ENCODE measurements at regions of chr14 and their contacts with region 1.

Region 1: GRCh38 chr14:91286530-91286937 is 42.0 kb upstream of the GPR68 start:
- DNase-seq: peak; percentile 87

Region 2: DNA sequence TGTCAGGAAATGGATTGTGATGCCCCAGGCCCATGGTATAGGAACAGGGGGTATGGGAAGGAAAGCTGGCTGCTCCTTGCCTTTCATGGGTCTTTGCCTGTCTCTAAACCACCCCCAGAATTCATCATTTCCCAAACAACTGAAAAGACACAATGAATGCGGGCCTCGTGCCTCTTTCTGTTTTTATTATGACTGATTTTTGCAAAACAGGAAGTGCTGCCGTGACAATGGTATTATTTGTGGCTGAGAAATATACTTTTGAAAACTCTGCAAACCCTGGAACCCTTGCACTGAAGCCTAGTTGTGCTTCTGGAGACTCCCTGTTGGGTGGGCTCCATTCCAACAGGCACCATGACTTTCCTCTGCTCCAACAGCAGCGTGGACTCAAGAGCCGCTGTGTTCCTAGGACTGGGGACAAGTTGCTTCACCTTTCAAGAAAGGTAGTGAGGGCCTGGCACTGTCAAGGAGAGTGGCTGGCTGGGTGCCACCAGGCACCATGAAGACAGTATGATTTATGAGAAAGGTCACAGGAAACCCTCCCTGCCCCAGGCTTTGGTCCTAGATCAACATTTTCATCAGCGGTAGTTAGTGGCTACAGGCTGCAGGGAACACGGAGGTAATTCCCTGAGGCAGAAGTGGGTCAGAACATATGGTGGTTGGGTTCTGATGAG is 177.5 kb before region 1 on chr14:
- in situ Hi-C with region 1: no loop called
- DNase-seq: peak; percentile 84

Region 3: GRCh38 chr14:91202234-91202974 is 84.1 kb before region 1 on chr14:
- in situ Hi-C with region 1: no loop called
- DNase-seq: peak; percentile 11

Region 4: DNA sequence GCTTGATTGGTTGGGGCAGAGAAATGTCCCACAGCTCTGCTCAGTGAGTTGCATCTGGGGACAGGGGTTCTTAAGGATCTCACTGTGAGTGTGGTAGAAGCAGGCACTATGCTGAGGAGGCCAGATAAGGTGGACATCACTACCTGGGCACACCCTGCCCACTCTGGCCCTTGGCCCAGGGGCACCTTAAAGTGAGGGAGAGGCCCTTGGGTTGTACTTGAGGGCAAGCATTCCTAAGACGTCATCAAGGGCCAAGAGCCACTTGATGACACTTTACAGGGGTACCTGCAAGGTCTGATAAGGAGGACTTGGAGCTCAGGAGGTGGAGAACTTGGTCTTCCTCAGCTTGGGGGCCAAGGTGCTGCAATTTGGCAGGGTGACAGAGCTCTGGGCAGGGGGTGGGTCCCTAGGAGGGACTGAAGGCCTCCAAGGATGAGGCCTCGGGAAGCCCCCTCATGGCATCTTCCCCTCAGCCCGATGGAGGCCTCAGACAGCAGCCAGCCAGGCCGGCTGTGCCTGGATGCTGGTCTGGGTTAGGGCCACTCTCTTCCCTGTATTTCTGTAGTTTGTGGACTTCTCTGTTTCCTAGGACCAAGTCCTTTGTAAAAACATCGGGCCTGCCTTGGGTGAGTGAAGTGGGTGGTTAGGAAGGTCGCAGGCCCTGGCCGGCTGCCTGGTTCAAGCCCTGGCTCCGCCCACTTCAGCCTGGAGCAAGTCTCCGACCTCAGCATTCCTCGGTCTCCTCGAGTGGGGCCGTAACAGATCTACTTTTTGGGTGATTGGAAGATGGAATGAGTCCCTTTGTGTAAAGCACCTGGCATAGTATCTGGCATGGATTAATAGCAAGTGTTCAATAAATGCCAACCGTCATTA is 66.8 kb before region 1 on chr14:
- in situ Hi-C with region 1: loop called (anchors 10 kb)
- DNase-seq: no peak